Naive thymus-derived CD4-positive, alpha-beta T cell (primary cell): ENCODE measurements at regions of chrX and their contacts with region 1.

Region 1: DNA sequence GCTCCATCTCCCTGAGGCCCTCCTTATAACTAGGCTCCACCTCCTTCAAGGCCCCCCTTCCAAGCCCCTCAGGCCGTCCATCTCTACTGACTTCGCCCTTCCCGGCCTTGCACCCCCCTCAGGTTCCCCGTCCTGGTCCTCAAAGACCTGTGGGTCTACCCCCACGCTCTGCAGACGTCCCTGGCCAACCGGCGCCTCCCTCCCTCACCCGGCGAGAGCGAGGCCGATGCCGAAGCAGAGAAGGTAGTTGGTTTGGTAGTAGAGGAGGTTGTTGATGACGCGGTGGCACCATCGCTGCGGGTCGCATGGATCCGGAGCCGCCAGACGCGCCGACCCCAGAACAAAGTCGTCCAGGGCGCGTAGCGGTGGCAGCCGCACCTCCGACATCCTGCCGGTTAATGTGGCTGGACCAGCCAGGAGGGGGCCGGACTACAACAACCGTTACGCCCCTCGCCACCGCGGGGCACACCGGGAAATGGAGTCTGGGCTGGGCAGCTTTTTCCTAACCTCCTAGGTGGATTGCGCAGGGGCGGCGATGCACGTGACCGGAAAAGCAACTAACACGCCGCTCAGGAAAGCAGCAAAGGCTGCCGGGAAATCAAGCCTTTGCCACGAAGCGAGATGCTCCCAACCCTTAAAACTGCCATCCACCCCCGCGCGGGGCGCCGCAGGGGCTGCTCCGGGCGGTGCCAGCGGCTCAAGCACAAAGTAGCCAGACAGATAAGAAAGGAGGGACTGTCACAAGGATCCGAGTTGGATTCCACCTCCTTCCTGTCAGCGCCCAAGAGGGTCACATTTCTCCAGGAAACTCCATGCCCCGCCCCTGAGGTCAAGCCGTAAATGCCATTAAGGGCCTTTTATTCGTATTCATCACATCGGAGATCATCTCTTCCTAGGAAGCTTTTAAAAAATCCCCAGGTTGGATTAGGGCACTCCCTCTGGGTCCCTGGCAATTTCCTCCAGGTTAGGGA is at the start of gene PRAF2:
- DNase-seq: peak; percentile 60 to 90 (median 86)
- ATAC-seq: peak; percentile 99
- H3K4me3 ChIP-seq: peak within 1 kb of the TSS; percentile 61
- H3K4me3 Mint-ChIP-seq: peak within 1 kb of the TSS; percentile 73 to 88 (median 83)
- H3K27ac ChIP-seq: peak within 1 kb of the TSS; percentile 78
- H3K27ac Mint-ChIP-seq: peak within 1 kb of the TSS; percentile 66 to 91 (median 86)
- H3K4me1 ChIP-seq: peaks cover 4 to 10% of the 10 kb centered on the region in 2 donors
- H3K4me1 Mint-ChIP-seq: peaks cover 9 to 25% (median 16%) of the 10 kb centered on the region in 7 donors
- H3K27me3 ChIP-seq: no peaks in the 10 kb centered on the region
- H3K27me3 Mint-ChIP-seq: no peaks in the 10 kb centered on the region
- total RNA-seq, gene PRAF2: 15.9 to 28.3 (median 20.4) TPM

Region 2: GRCh38 chrX:49053223-49054072 is 20.4 kb before region 1 on chrX:
- CTCF ChIA-PET with region 1: no interaction called
- POLR2A ChIA-PET with region 1: interaction called, 3 read pairs
- intact Hi-C with region 1: loop called (anchors 1 to 2 kb)
- DNase-seq: peak; percentile 22 to 60 (median 51)
- ATAC-seq: peak; percentile 91
- H3K4me3 ChIP-seq: peak overlapping the region; percentile 48
- H3K4me3 Mint-ChIP-seq: peak overlapping the region; percentile 76 to 92 (median 88)
- H3K27ac ChIP-seq: peak overlapping the region; percentile 92
- H3K27ac Mint-ChIP-seq: peak overlapping the region; percentile 86 to 96 (median 93)
- H3K4me1 ChIP-seq: peaks cover 8% of the 10 kb centered on the region in 2 donors
- H3K4me1 Mint-ChIP-seq: peaks cover 16 to 37% (median 30%) of the 10 kb centered on the region in 7 donors
- H3K27me3 ChIP-seq: no peaks in the 10 kb centered on the region
- H3K27me3 Mint-ChIP-seq: peaks cover 0 to 3% (median 0%) of the 10 kb centered on the region in 5 donors

Region 3: GRCh38 chrX:49100704-49101628 is 27.1 kb after region 1 on chrX:
- CTCF ChIA-PET with region 1: no interaction called
- POLR2A ChIA-PET with region 1: interaction called, 12 read pairs
- intact Hi-C with region 1: loop called (anchors 1 kb)
- DNase-seq: peak; percentile 75 to 90 (median 87)
- ATAC-seq: peak; percentile 97
- H3K4me3 ChIP-seq: peak overlapping the region; percentile 82
- H3K4me3 Mint-ChIP-seq: peak overlapping the region; percentile 80 to 93 (median 90)
- H3K27ac ChIP-seq: peak overlapping the region; percentile 78
- H3K27ac Mint-ChIP-seq: peak overlapping the region; percentile 74 to 95 (median 91)
- H3K4me1 ChIP-seq: no peaks in the 10 kb centered on the region
- H3K4me1 Mint-ChIP-seq: peaks cover 0 to 8% (median 0%) of the 10 kb centered on the region in 7 donors
- H3K27me3 ChIP-seq: no peaks in the 10 kb centered on the region
- H3K27me3 Mint-ChIP-seq: no peaks in the 10 kb centered on the region

Region 4: DNA sequence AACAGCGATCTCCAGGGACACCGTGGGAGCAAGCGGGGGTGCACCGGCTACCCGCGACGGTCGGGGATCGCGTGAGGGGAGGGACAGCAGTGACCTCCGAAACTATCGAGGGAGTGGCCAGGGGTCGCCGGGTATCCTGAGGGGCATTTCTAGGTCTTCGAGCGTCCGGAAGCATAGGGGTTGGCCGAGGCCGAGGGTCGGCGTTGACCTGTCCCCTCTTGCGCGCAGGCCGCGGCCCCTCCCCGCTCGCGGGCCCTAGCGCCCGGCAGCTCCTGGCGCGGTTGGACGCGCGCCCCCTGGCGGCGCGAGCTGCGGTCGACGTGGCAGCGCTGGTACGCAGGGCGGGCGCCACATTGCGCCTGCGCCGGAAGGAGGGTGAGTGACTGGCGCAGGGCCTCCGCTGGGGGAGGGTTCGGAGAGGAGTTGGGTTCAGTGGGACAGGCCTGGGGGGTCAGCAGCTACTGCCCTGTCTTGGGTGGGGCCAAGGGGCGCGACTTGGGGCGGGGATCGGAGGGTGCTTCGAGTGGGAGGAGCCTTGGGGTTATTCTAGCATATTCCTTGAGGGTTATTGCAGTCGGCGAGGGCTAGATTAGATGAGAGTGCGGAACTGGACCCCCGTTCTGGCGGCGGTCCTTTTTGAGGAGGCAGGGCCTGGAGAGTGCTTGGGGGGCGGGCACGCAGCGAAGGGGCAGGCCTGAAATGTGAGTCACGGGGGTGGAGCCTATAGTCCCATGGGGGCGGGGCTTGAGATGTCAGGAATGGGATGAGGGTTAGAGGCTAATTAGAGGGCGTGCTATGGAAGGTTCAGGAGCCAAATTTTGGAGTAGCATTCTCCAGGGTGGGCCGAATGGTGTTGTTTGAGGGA is 89.9 kb after region 1 on chrX:
- CTCF ChIA-PET with region 1: no interaction called
- POLR2A ChIA-PET with region 1: no interaction called
- intact Hi-C with region 1: loop called in 1 of 2 experiments (anchors 10 kb)
- DNase-seq: peak; percentile 71 to 84 (median 80)
- ATAC-seq: peak; percentile 74
- H3K4me3 ChIP-seq: peak overlapping the region; percentile 50
- H3K4me3 Mint-ChIP-seq: peak overlapping the region; percentile 72 to 84 (median 81)
- H3K27ac ChIP-seq: peak overlapping the region; percentile 74
- H3K27ac Mint-ChIP-seq: peak overlapping the region; percentile 79 to 97 (median 92)
- H3K4me1 ChIP-seq: peaks cover 14 to 16% of the 10 kb centered on the region in 2 donors
- H3K4me1 Mint-ChIP-seq: peaks cover 13 to 33% (median 26%) of the 10 kb centered on the region in 7 donors
- H3K27me3 ChIP-seq: no peaks in the 10 kb centered on the region
- H3K27me3 Mint-ChIP-seq: peaks cover 0 to under 1% (median 0%) of the 10 kb centered on the region in 5 donors

Region 5: DNA sequence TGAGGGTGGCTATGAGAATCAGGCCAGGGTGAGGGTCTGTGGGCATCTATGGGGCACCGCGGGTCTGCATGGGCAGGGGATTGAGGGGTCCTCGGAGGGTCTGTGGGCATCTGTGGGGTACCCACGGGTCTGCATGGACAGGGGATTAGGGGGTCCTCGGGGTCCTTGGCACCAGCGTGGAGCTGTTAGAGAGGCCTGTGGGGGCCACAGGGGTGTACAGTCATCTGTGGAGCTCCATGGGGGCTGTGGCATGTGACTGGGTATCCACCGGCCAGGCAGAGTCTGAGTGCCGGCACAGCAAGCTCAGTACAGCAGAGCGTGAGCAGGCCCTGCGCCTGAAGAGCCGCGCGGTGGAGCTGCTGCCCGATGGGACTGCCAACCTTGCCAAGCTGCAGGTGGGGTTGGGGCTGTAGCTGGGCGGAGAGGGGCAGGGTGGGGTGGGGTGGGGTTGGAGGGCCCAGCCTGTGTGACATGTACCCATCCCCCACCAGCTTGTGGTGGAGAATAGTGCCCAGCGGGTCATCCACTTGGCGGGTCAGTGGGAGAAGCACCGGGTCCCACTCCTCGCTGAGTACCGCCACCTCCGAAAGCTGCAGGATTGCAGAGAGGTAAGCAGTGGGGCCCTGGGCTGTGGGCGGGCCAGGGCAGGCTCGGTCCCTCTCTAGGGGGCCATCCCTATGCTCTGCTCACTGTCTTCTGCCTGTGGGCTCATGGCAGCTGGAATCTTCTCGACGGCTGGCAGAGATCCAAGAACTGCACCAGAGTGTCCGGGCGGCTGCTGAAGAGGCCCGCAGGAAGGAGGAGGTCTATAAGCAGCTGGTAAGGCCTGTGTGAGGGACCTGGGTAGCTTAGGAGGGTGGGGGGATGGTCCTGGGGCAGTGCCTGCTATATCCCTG is 174.3 kb after region 1 on chrX:
- CTCF ChIA-PET with region 1: no interaction called
- POLR2A ChIA-PET with region 1: no interaction called
- intact Hi-C with region 1: no loop called
- DNase-seq: no peak
- ATAC-seq: no peak
- H3K4me3 ChIP-seq: no peak overlapping the region
- H3K4me3 Mint-ChIP-seq: no peak overlapping the region
- H3K27ac ChIP-seq: no peak overlapping the region
- H3K27ac Mint-ChIP-seq: peak overlapping the region in 1 of 9 donors; percentile 17
- H3K4me1 ChIP-seq: no peaks in the 10 kb centered on the region
- H3K4me1 Mint-ChIP-seq: peaks cover 0 to 11% (median 3%) of the 10 kb centered on the region in 7 donors
- H3K27me3 ChIP-seq: no peaks in the 10 kb centered on the region
- H3K27me3 Mint-ChIP-seq: no peaks in the 10 kb centered on the region